Activated CD4-positive, alpha-beta memory T cell treated with anti-CD3 and anti-CD28 coated beads, Interleukin-2, amount 10 ng/mL, durations not matched to agents 7 days and 5 days (primary cell): ENCODE measurements at regions of chr1 and their contacts with region 1.

Region 1: DNA sequence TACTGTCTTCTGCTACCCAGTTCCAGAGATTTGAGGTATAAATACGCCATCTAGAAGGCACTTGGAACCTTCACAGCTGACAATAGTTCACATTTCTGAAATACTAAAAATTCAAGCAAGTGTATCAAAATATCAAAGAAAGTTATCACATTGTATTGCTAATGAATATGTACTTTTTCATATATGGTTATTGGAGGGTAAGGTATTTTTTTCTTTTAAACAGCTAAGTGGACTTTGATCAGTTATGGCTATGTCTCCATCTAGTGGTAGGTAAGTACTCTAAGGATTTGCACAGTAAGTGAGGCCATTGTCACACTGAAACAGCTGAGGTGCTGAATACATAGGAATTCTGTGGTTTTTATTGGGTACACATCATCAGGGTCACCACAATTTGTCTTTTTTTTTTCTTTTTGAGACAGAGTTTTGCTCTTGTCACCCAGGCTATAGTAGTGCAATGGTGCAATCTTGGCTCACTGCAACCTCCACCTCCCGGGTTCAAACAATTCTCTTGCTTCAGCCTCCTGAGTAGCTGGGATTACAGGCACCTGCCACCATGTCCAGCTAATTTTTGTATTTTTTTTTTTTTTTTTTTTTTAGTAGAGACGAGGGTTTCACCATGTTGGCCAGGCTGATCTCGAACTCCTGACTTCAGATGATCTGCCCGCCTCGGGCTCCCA is 49.1 kb upstream of the CR2 start:
- DNase-seq: no peak
- H3K4me3 Mint-ChIP-seq: no peak overlapping the region
- H3K27ac Mint-ChIP-seq: no peak overlapping the region
- H3K4me1 Mint-ChIP-seq: peaks cover 11% of the 10 kb centered on the region
- H3K27me3 Mint-ChIP-seq: peaks cover 3% of the 10 kb centered on the region

Region 2: GRCh38 chr1:207069858-207070506 is 335.0 kb before region 1 on chr1:
- CTCF ChIA-PET with region 1: interaction called, 10 read pairs
- POLR2A ChIA-PET with region 1: no interaction called
- DNase-seq: no peak
- H3K4me3 Mint-ChIP-seq: no peak overlapping the region
- H3K27ac Mint-ChIP-seq: no peak overlapping the region
- H3K4me1 Mint-ChIP-seq: peaks cover 26% of the 10 kb centered on the region
- H3K27me3 Mint-ChIP-seq: peaks cover 15% of the 10 kb centered on the region

Region 3: GRCh38 chr1:207084701-207085180 is 320.2 kb before region 1 on chr1:
- CTCF ChIA-PET with region 1: interaction called, 56 read pairs
- POLR2A ChIA-PET with region 1: interaction called, 5 read pairs
- DNase-seq: peak; percentile 59
- H3K4me3 Mint-ChIP-seq: no peak overlapping the region
- H3K27ac Mint-ChIP-seq: no peak overlapping the region
- H3K4me1 Mint-ChIP-seq: peaks cover 18% of the 10 kb centered on the region
- H3K27me3 Mint-ChIP-seq: peaks cover 45% of the 10 kb centered on the region

Region 4: DNA sequence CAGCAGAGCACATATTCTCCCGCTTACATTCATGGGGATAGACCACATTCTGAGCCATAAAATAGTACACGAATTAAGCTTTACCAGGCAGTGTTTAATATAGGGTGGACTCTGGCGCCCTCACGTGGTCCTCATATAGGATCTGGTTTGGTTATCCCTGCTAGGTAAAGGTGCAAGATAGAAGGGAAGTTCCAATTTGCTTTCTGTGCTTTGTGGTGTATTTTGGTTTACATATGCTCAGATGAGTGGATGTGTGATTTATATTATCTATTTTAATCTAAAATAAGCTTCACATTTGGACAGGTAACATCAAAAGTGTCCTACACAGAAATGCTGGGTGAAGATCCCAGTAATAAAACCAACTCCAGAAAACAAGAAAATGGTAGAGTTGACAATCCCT is 94.6 kb after region 1 on chr1:
- CTCF ChIA-PET with region 1: interaction called, 21 read pairs
- POLR2A ChIA-PET with region 1: no interaction called
- DNase-seq: peak; percentile 73
- H3K4me3 Mint-ChIP-seq: no peak overlapping the region
- H3K27ac Mint-ChIP-seq: no peak overlapping the region
- H3K4me1 Mint-ChIP-seq: peaks cover 10% of the 10 kb centered on the region
- H3K27me3 Mint-ChIP-seq: peaks cover 58% of the 10 kb centered on the region